Motor neuron (in vitro differentiated cells): ENCODE measurements at regions of chr18 and their contacts with region 1.

Region 1: GRCh38 chr18:63016270-63016669 is 300.9 kb downstream of the PHLPP1 start:
- ATAC-seq: peak in 5 of 8 experiments; percentile 51 to 78 (median 65)
- H3K4me3 ChIP-seq: no peak overlapping the region
- H3K27ac ChIP-seq: no peak overlapping the region
- H3K4me1 ChIP-seq: no peaks in the 10 kb centered on the region

Region 2: GRCh38 chr18:63320046-63320689 is 303.9 kb after region 1 on chr18:
- in situ Hi-C with region 1: loop called in 7 of 9 experiments (anchors 5 to 25 kb)
- ATAC-seq: peak; percentile 78 to 85 (median 84)
- H3K4me3 ChIP-seq: peak overlapping the region; percentile 62 to 94 (median 75)
- H3K27ac ChIP-seq: peak overlapping the region; percentile 85 to 86
- H3K4me1 ChIP-seq: peaks cover 18 to 29% of the 10 kb centered on the region in 2 donors

Region 3: GRCh38 chr18:63329431-63330145 is 313.3 kb after region 1 on chr18:
- in situ Hi-C with region 1: loop called in 8 of 9 experiments (anchors 5 to 25 kb)
- ATAC-seq: no peak
- H3K4me3 ChIP-seq: no peak overlapping the region
- H3K27ac ChIP-seq: no peak overlapping the region
- H3K4me1 ChIP-seq: no peaks in the 10 kb centered on the region

Region 4: DNA sequence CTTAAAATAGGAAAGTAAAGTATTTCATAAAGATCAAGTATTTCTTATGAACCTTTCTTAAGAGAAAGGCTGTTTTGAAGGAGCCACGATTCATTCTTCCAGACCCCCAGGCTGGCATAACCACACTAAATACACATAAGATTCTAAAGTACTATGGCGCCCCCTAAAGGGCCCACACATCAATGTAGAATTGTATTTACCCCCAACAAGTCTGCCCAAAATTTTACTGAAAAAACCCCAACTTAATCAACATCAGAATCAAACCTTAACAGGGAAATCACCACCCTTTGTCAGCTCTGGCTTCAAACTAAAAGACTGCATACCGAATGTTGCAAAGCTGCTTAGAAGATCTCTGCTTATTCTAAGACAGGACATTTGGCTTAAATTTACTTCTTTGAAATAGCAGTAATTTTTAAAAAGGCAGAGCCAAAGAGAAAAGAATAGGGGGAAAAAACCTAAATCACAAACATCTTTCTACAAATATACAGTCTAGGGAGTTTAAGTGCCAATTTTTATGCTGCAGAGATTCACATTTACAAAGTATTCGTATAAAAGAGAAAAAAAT is 323.7 kb after region 1 on chr18:
- in situ Hi-C with region 1: loop called in 4 of 9 experiments (anchors 10 to 25 kb)
- ATAC-seq: peak in 1 of 8 experiments; percentile 48
- H3K4me3 ChIP-seq: no peak overlapping the region
- H3K27ac ChIP-seq: no peak overlapping the region
- H3K4me1 ChIP-seq: no peaks in the 10 kb centered on the region

Region 5: GRCh38 chr18:63439334-63439733 is 423.1 kb after region 1 on chr18:
- in situ Hi-C with region 1: loop called in 4 of 9 experiments (anchors 10 to 25 kb)
- ATAC-seq: peak; percentile 15 to 69 (median 50)
- H3K4me3 ChIP-seq: no peak overlapping the region
- H3K27ac ChIP-seq: no peak overlapping the region
- H3K4me1 ChIP-seq: no peaks in the 10 kb centered on the region